ENCODE measurements at regions of chr6 and their contacts with region 1.

Region 1: GRCh38 chr6:91081452-91082067 is 494.7 kb upstream of the MAP3K7 start:
- DNase-seq: peak; percentile 15 to 59 (median 46)
- H3K4me3 ChIP-seq: no peak overlapping the region
- H3K27ac ChIP-seq: no peak overlapping the region
- H3K4me1 ChIP-seq: no peaks in the 10 kb centered on the region
- H3K27me3 ChIP-seq: no peaks in the 10 kb centered on the region

Region 2: GRCh38 chr6:91094806-91095475 is 13.4 kb after region 1 on chr6:
- CTCF ChIA-PET with region 1: interaction called, 10 read pairs
- POLR2A ChIA-PET with region 1: no interaction called
- DNase-seq: no peak
- H3K4me3 ChIP-seq: no peak overlapping the region
- H3K27ac ChIP-seq: no peak overlapping the region
- H3K4me1 ChIP-seq: no peaks in the 10 kb centered on the region
- H3K27me3 ChIP-seq: no peaks in the 10 kb centered on the region

Region 3: GRCh38 chr6:91317247-91317835 is 235.8 kb after region 1 on chr6:
- CTCF ChIA-PET with region 1: no interaction called
- POLR2A ChIA-PET with region 1: no interaction called
- DNase-seq: no peak
- H3K4me3 ChIP-seq: no peak overlapping the region
- H3K27ac ChIP-seq: no peak overlapping the region
- H3K4me1 ChIP-seq: no peaks in the 10 kb centered on the region
- H3K27me3 ChIP-seq: no peaks in the 10 kb centered on the region